IMR-90 (cell line): ENCODE measurements at regions of chrX and their contacts with region 1.

Region 1: GRCh38 chrX:102546828-102547493 is 30.4 kb upstream of the TMSB15A start:
- DNase-seq: no peak
- ATAC-seq: no peak
- H3K4me3 ChIP-seq: peak overlapping the region; percentile 46
- H3K27ac ChIP-seq: no peak overlapping the region
- H3K4me1 ChIP-seq: no peaks in the 10 kb centered on the region
- H3K27me3 ChIP-seq: peaks cover 15% of the 10 kb centered on the region
- CTCF ChIP-seq: no peak
- POLR2A ChIP-seq: no peak
- RAD21 ChIP-seq: no peak

Region 2: GRCh38 chrX:103498786-103499185 is 951.8 kb after region 1 on chrX:
- CTCF ChIA-PET with region 1: no interaction called
- POLR2A ChIA-PET with region 1: no interaction called
- dilution Hi-C with region 1: no loop called
- in situ Hi-C with region 1: no loop called
- intact Hi-C with region 1: loop called (anchors 10 kb)
- DNase-seq: no peak
- ATAC-seq: no peak
- H3K4me3 ChIP-seq: no peak overlapping the region
- H3K27ac ChIP-seq: no peak overlapping the region
- H3K4me1 ChIP-seq: no peaks in the 10 kb centered on the region; the same call in 1 of the 2 replicates
- H3K27me3 ChIP-seq: no peaks in the 10 kb centered on the region; the same call in 1 of the 2 replicates
- CTCF ChIP-seq: no peak
- POLR2A ChIP-seq: no peak
- RAD21 ChIP-seq: no peak